WTC11 (cell line): ENCODE measurements at regions of chr10 and their contacts with region 1.

Region 1: GRCh38 chr10:98467506-98468346 is 21.0 kb upstream of the HPS1 start:
- DNase-seq: peak; percentile 68
- ATAC-seq: peak; percentile 92
- H3K4me3 Mint-ChIP-seq: peak overlapping the region; percentile 76
- H3K27ac Mint-ChIP-seq: no peak overlapping the region
- H3K4me1 Mint-ChIP-seq: peaks cover 42% of the 10 kb centered on the region
- H3K27me3 Mint-ChIP-seq: peaks cover 28% of the 10 kb centered on the region
- CTCF ChIP-seq: peak; percentile 65

Region 2: GRCh38 chr10:98262571-98262970 is 205.2 kb before region 1 on chr10:
- CTCF ChIA-PET with region 1: no interaction called
- POLR2A ChIA-PET with region 1: no interaction called
- DNase-seq: peak; percentile 66
- ATAC-seq: peak; percentile 87
- H3K4me3 Mint-ChIP-seq: no peak overlapping the region
- H3K27ac Mint-ChIP-seq: no peak overlapping the region
- H3K4me1 Mint-ChIP-seq: peaks cover 5% of the 10 kb centered on the region
- H3K27me3 Mint-ChIP-seq: peaks cover 5% of the 10 kb centered on the region
- CTCF ChIP-seq: peak; percentile 25; the same call in 1 of the 2 replicates

Region 3: GRCh38 chr10:98404571-98405359 is 63.0 kb before region 1 on chr10:
- CTCF ChIA-PET with region 1: no interaction called
- POLR2A ChIA-PET with region 1: no interaction called
- DNase-seq: no peak
- ATAC-seq: no peak
- H3K4me3 Mint-ChIP-seq: no peak overlapping the region
- H3K27ac Mint-ChIP-seq: no peak overlapping the region
- H3K4me1 Mint-ChIP-seq: peaks cover 5% of the 10 kb centered on the region
- H3K27me3 Mint-ChIP-seq: no peaks in the 10 kb centered on the region
- CTCF ChIP-seq: no peak

Region 4: DNA sequence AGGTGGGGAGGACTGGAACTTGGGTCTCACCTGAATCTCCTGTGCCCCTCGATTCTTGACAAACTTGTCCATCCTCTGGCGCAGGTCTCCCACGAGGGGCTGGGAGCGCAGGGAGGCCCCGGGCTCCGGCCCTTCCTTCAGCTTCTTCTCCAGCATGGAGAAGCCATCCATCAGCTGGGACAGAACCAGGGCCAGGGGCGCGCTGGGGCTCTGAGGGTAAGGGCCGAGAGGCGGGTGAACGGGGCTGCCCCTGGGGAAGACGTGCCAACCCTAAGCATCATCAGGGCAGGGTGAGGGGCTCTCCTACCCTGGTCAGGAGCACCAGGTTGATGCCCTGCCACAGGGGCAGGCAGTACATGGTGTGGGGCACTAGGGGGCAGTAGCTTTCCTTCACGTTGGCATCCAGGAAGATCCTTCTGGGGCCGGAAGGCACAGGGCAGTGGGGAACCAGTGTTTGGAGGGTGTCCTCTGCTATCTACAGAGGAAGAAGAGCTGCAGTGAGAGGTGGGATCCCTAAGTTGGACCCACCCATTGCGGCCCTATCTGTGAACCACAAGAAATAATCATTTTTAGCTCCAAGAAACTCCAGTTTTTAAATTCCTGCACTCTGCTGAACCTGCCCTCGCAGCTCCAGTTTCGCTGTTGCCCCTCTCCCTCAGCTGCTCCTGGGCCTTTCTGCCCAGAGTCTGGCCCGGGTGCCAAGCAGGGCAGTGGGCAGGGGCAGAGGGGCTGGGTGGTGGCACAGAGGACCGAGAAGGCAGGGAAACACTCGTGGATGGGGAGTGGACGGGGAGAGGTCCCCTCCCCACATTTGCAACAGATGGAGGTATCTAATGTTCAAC is 42.0 kb before region 1 on chr10:
- CTCF ChIA-PET with region 1: interaction called, 37 read pairs
- POLR2A ChIA-PET with region 1: no interaction called
- DNase-seq: peak; percentile 83
- ATAC-seq: peak; percentile 88
- H3K4me3 Mint-ChIP-seq: no peak overlapping the region
- H3K27ac Mint-ChIP-seq: no peak overlapping the region
- H3K4me1 Mint-ChIP-seq: no peaks in the 10 kb centered on the region
- H3K27me3 Mint-ChIP-seq: no peaks in the 10 kb centered on the region
- CTCF ChIP-seq: peak; percentile 82

Region 5: GRCh38 chr10:98510412-98510995 is 42.8 kb after region 1 on chr10:
- CTCF ChIA-PET with region 1: interaction called, 11 read pairs
- POLR2A ChIA-PET with region 1: no interaction called
- DNase-seq: no peak
- ATAC-seq: no peak
- H3K4me3 Mint-ChIP-seq: no peak overlapping the region
- H3K27ac Mint-ChIP-seq: no peak overlapping the region
- H3K4me1 Mint-ChIP-seq: 0 out of 2 replicates have a peak, but pooled peaks cover 2% of the 10 kb centered on the region
- H3K27me3 Mint-ChIP-seq: no peaks in the 10 kb centered on the region
- CTCF ChIP-seq: no peak

Region 6: GRCh38 chr10:98555021-98555619 is 87.4 kb after region 1 on chr10:
- CTCF ChIA-PET with region 1: no interaction called
- POLR2A ChIA-PET with region 1: no interaction called
- DNase-seq: no peak
- ATAC-seq: peak; percentile 46; the same call in 1 of the 2 replicates
- H3K4me3 Mint-ChIP-seq: no peak overlapping the region
- H3K27ac Mint-ChIP-seq: no peak overlapping the region
- H3K4me1 Mint-ChIP-seq: peaks cover 4% of the 10 kb centered on the region
- H3K27me3 Mint-ChIP-seq: no peaks in the 10 kb centered on the region
- CTCF ChIP-seq: no peak

Region 7: DNA sequence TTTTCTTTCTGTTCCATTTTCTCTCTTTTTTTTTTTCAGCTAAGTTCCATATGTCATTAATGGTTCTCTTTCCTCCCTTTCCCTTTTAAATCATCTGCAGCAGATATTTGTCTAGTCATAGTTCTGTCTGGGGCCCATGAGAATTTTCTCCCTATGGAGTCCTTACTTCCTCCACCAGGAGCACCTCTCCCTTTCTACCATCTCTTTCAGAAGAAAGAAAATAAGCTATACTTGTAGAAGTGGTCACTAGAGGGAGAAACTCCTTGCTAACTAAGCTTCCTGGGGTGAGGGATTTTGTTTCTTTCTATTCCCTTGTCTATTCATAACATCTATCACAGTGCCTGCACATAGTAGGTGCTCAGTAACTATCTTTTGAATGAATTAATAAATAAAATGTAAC is 209.2 kb after region 1 on chr10:
- CTCF ChIA-PET with region 1: interaction called, 22 read pairs
- POLR2A ChIA-PET with region 1: interaction called, 4 read pairs
- DNase-seq: no peak
- ATAC-seq: peak; percentile 80
- H3K4me3 Mint-ChIP-seq: no peak overlapping the region
- H3K27ac Mint-ChIP-seq: no peak overlapping the region
- H3K4me1 Mint-ChIP-seq: peaks cover 24% of the 10 kb centered on the region
- H3K27me3 Mint-ChIP-seq: no peaks in the 10 kb centered on the region
- CTCF ChIP-seq: no peak

Region 8: DNA sequence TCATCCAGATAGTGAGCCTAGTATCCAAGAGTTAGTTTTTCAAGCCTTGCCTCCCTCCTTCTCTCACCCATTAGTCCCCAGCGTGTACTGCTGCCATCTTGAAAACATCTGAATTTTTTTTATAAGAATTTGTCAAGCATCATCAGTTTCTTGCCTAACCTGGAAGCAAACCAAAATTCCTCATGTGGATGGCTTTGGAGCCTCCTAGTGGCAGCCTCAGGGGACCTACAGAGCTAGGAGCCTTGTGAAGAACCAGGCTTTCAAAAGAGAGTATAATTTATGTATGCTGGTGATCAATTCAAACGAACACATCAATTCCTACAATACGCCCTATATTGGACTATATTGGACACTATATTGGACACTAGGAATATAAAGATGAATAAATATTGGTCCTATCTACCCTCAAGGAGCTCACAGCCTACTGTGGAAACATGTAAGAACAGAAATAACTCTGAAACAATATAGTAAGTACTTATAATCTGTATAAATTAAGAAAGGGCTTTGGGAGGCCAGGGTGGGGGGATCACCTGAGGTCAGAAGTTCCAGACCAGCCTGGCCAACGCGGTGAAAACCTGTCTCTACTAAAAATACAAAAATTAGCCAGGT is 704.5 kb after region 1 on chr10:
- CTCF ChIA-PET with region 1: interaction called, 11 read pairs
- POLR2A ChIA-PET with region 1: no interaction called
- DNase-seq: peak; percentile 65
- ATAC-seq: peak; percentile 81
- H3K4me3 Mint-ChIP-seq: no peak overlapping the region
- H3K27ac Mint-ChIP-seq: no peak overlapping the region
- H3K4me1 Mint-ChIP-seq: peaks cover 13% of the 10 kb centered on the region
- H3K27me3 Mint-ChIP-seq: no peaks in the 10 kb centered on the region
- CTCF ChIP-seq: peak; percentile 61

Region 9: DNA sequence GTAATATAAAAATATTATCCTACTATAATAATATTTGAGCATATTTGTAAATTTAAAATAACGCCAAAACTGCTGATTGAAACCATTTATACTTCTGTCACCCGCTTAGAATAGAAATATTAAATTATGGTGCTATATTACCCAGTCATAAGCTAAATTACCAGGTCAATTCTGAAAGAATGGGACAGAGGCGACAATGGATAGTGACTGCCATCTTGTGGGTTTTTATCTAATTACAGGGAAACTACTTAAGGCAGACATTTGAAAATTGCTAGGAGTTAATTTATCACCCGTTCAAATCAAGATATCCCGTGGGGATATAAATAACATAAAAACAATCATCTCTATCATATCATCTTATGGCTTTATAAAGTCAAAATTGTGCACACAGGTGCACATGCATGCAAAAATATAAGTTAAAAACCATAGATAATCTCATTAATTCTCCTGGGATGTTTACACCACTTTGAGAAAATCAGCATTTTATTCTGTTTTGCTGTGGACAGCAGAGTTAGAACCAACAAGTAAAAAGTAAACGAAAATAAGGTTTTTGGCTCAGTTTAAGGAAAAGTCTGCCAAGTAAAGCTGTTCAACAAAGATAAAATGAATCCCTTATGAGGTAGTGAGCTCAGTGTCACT is 809.2 kb after region 1 on chr10:
- CTCF ChIA-PET with region 1: interaction called, 10 read pairs
- POLR2A ChIA-PET with region 1: no interaction called
- DNase-seq: no peak
- ATAC-seq: no peak
- H3K4me3 Mint-ChIP-seq: no peak overlapping the region
- H3K27ac Mint-ChIP-seq: no peak overlapping the region
- H3K4me1 Mint-ChIP-seq: peaks cover 14% of the 10 kb centered on the region
- H3K27me3 Mint-ChIP-seq: no peaks in the 10 kb centered on the region
- CTCF ChIP-seq: peak; percentile 49; the same call in 1 of the 2 replicates